ENCODE measurements at regions of chr22 and their contacts with region 1.

Region 1: GRCh38 chr22:26364066-26365015 is 64.7 kb upstream of the ASPHD2 start:
- DNase-seq: peak; percentile 21 to 82
- ATAC-seq: peak; percentile 61 to 81 (median 75)
- H3K4me3 ChIP-seq: no peak overlapping the region
- H3K4me3 Mint-ChIP-seq: no peak overlapping the region
- H3K27ac ChIP-seq: no peak overlapping the region
- H3K27ac Mint-ChIP-seq: no peak overlapping the region
- H3K4me1 ChIP-seq: peaks cover 6% of the 10 kb centered on the region
- H3K4me1 Mint-ChIP-seq: peaks cover 12 to 16% of the 10 kb centered on the region in 2 donors
- H3K27me3 ChIP-seq: peaks cover 3% of the 10 kb centered on the region
- H3K27me3 Mint-ChIP-seq: peaks cover 5 to 22% of the 10 kb centered on the region in 2 donors
- CTCF ChIP-seq: peak; percentile 59

Region 2: GRCh38 chr22:26461188-26461810 is 97.0 kb after region 1 on chr22:
- intact Hi-C with region 1: loop called (anchors 1 kb)
- DNase-seq: peak in 1 of 2 donors; percentile 63
- ATAC-seq: peak in 1 of 3 donors; percentile 58
- H3K4me3 ChIP-seq: no peak overlapping the region
- H3K4me3 Mint-ChIP-seq: no peak overlapping the region
- H3K27ac ChIP-seq: no peak overlapping the region
- H3K27ac Mint-ChIP-seq: no peak overlapping the region
- H3K4me1 ChIP-seq: no peaks in the 10 kb centered on the region
- H3K4me1 Mint-ChIP-seq: no peaks in the 10 kb centered on the region
- H3K27me3 ChIP-seq: no peaks in the 10 kb centered on the region
- H3K27me3 Mint-ChIP-seq: no peaks in the 10 kb centered on the region
- CTCF ChIP-seq: peak; percentile 55

Region 3: DNA sequence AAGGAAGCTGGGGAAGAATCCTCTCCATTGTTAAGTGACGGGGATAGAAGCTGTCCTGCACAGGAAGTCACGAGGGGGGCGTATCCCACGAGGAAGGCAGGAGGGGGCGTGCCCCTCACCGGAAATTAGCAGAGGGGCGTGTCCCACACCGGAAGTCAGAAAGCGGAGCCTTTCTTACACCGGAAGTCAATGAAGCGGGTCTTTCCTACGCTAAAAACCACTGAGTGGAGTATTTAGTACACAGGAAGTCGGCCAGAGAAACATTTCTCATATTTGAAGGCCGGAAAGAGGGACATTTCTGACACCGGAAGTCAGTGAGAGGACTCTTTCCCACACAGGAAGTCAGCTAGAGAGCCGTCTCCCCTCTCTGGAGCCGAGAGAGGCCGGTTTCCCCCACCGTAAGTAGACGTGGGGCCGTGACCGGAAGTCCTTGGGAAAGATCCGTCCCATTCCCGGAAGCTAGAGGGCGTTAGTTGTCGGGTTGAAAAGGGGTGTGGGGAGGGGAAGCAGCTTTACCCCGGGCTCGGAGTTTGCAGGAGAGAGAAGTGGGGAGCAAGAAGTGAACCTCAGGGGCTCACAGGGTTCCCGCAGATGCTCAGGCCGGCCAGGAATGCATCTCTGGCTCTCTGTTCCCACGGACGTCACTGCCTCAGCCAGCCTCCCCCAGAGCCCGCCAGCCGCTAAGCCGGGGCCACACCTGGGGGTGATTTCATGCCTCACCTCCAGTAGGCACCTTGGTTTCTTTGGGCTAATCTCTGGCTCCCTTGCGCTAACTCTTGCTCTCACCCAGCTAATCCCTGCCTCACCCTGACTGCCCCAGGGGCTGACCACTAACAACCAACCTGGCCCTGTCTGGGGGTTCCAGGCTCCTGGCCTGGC is 308.5 kb after region 1 on chr22:
- intact Hi-C with region 1: loop called (anchors 10 kb)
- DNase-seq: peak; percentile 87 to 97
- ATAC-seq: peak; percentile 60 to 87 (median 77)
- H3K4me3 ChIP-seq: peak overlapping the region; percentile 65
- H3K4me3 Mint-ChIP-seq: peak overlapping the region; percentile 96
- H3K27ac ChIP-seq: peak overlapping the region; percentile 91
- H3K27ac Mint-ChIP-seq: peak overlapping the region; percentile 95 to 99
- H3K4me1 ChIP-seq: peaks cover 86% of the 10 kb centered on the region
- H3K4me1 Mint-ChIP-seq: peaks cover 80 to 88% of the 10 kb centered on the region in 2 donors
- H3K27me3 ChIP-seq: no peaks in the 10 kb centered on the region
- H3K27me3 Mint-ChIP-seq: no peaks in the 10 kb centered on the region
- CTCF ChIP-seq: no peak

Region 4: DNA sequence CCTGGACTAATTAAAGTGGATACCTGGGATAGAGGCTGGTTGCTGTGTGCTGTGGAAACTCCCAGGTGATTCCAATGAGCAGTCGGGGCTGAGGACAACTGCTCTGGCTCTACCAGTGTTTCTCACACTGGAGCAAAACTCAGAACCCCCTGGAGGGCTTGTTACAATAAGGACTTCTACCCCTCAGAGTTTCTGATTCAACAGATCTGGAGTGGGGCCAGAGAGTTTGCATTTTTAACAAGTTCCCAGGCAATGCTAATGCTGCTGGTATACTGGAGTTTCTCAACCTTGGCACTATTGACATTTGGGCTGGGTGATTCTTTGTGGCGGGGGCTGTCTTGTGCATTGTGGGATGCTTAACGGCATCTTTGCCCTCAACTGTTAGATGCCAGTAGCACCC is 646.8 kb after region 1 on chr22:
- intact Hi-C with region 1: no loop called
- DNase-seq: no peak
- ATAC-seq: no peak
- H3K4me3 ChIP-seq: no peak overlapping the region
- H3K4me3 Mint-ChIP-seq: no peak overlapping the region
- H3K27ac ChIP-seq: no peak overlapping the region
- H3K27ac Mint-ChIP-seq: no peak overlapping the region
- H3K4me1 ChIP-seq: no peaks in the 10 kb centered on the region
- H3K4me1 Mint-ChIP-seq: no peaks in the 10 kb centered on the region
- H3K27me3 ChIP-seq: no peaks in the 10 kb centered on the region
- H3K27me3 Mint-ChIP-seq: no peaks in the 10 kb centered on the region
- CTCF ChIP-seq: no peak